Transverse colon (tissue), 4 donors: ENCODE measurements at regions of chr10 and their contacts with region 1.

Region 1: DNA sequence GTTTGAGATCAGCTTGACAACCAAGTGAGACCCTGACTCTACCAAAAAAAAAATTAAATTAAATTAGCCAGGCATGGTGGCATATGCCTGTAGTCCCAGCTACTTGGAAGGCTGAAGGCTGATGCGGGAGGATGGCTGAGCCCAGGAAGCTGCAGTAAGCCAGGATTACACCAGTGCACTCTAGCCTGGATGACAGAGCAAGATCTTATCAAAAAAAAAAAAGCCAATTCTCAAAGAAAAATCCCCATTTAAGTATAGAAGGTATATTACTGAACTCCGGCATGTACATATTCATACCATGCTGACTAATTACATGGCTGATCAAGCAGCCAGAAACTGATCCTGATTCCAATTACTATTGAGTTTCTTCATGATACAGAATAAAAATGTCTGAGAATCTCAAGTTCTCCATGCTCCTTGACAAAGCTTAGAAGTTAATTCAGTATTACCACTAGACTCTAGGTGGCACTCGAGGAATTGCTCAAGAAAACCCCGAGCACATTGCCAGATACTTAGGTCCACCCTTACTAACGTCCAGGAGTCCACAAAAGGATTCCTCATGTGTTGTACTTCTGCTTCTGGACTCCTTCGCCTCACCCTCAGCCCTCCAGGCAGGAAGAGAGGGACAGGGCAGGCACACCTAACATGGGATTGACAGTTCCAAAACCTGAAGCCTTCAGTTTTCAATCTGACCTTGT is 148.9 kb downstream of the PARD3 start:
- DNase-seq: peak; percentile 37
- H3K4me3 ChIP-seq: no peak overlapping the region
- H3K27ac ChIP-seq: no peak overlapping the region
- H3K4me1 ChIP-seq: peaks cover 0 to 25% (median 8%) of the 10 kb centered on the region in 4 donors
- H3K27me3 ChIP-seq: no peaks in the 10 kb centered on the region
- CTCF ChIP-seq: peak; percentile 48 to 59 (median 54)
- EP300 ChIP-seq: no peak
- POLR2A ChIP-seq: no peak

Region 2: DNA sequence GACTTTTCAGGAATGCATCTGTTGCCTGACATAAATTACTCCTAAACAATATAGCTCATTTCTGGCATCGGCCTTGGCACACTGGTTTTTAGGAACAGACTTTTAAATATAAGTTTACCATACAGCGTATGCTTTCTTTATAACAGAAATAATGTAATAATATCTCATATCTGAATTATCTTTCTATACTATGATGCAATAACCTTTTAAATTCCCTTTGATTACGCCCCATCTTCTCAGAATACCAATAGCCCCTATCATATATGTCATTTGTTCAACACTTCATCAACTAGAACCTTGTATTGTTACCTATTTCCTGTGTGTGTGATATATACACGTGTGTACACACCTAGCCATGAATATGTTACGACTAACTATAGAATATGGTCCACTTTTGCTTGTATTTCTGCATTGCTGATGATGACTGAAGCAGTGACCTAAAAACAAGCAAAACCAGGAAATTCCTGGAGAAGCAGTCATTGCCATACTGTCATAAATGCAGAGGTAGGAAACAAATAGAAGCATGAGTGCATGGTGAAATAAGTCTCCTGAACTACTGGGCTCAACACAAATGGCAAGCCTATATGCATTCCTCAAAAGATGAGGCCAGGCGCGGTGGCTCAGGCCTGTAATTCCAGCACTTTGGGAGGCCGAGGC is 713.3 kb before region 1 on chr10:
- in situ Hi-C with region 1: no loop called
- intact Hi-C with region 1: no loop called
- DNase-seq: no peak
- H3K4me3 ChIP-seq: no peak overlapping the region
- H3K27ac ChIP-seq: no peak overlapping the region
- H3K4me1 ChIP-seq: no peaks in the 10 kb centered on the region
- H3K27me3 ChIP-seq: no peaks in the 10 kb centered on the region
- CTCF ChIP-seq: no peak
- EP300 ChIP-seq: no peak
- POLR2A ChIP-seq: no peak

Region 3: DNA sequence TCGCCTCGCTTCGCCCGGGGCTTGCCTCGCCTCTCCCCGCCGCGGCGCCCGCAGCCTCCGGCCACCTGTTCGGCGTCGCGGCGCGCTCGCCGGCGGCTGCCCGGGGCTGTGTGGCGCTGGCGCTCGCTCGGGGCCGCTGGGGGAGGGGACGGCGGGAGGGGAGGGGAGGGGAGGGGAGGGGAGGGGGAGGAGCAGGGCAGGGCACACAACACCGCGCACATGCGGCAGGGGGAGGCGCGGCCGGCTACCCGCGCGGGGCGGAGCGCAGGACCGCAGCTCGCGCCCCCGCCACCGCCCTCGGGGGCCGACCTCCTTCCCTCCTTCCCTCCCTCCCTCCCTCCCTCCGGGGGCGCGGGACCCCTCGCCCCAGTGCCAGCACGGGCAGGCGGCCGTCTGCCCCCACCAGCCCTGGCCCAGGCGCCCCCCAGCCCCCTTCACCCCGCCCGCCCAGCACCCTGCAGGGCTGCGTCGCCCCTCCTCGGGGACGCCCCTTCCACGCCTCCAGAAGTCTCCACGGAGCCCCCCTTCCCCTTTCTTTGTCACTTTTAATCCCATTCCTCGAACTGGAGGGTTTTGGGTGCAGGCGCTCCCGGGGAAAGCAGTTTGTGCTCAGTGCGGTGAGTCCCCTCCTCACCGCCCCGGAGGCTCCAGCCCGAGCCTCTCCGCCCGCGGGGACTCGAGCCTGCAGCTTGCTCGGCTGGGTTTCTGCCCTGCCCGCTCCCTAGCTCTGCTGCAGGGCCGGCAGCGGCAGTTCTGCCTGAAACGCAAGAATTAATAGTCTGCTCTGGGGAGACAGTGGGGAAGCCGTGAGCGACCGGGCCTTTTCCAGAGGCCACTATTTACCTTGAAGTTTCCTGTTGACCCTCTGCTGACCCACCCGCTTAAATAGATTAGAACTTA is 149.3 kb after region 1 on chr10 and contains the start of gene PARD3:
- in situ Hi-C with region 1: no loop called
- intact Hi-C with region 1: loop called (anchors 5 kb)
- DNase-seq: peak; percentile 73
- H3K4me3 ChIP-seq: peak within 1 kb of the TSS; percentile 78 to 98 (median 91)
- H3K27ac ChIP-seq: peak within 1 kb of the TSS; percentile 91 to 95 (median 94)
- H3K4me1 ChIP-seq: peaks cover 0 to 31% (median 24%) of the 10 kb centered on the region in 4 donors
- H3K27me3 ChIP-seq: no peaks in the 10 kb centered on the region
- CTCF ChIP-seq: no peak
- EP300 ChIP-seq: no peak
- POLR2A ChIP-seq: no peak
- total RNA-seq, gene PARD3: 27.3 to 65.3 (median 55.6) TPM

Region 4: GRCh38 chr10:35442028-35442427 is 775.9 kb after region 1 on chr10:
- in situ Hi-C with region 1: no loop called
- intact Hi-C with region 1: no loop called
- DNase-seq: no peak
- H3K4me3 ChIP-seq: no peak overlapping the region
- H3K27ac ChIP-seq: no peak overlapping the region
- H3K4me1 ChIP-seq: peaks cover 0 to under 1% (median under 1%) of the 10 kb centered on the region in 4 donors
- H3K27me3 ChIP-seq: no peaks in the 10 kb centered on the region
- CTCF ChIP-seq: no peak
- EP300 ChIP-seq: no peak
- POLR2A ChIP-seq: no peak